Heart right ventricle (tissue), 16 donors: ENCODE measurements at regions of chr7 and their contacts with region 1.

Region 1: DNA sequence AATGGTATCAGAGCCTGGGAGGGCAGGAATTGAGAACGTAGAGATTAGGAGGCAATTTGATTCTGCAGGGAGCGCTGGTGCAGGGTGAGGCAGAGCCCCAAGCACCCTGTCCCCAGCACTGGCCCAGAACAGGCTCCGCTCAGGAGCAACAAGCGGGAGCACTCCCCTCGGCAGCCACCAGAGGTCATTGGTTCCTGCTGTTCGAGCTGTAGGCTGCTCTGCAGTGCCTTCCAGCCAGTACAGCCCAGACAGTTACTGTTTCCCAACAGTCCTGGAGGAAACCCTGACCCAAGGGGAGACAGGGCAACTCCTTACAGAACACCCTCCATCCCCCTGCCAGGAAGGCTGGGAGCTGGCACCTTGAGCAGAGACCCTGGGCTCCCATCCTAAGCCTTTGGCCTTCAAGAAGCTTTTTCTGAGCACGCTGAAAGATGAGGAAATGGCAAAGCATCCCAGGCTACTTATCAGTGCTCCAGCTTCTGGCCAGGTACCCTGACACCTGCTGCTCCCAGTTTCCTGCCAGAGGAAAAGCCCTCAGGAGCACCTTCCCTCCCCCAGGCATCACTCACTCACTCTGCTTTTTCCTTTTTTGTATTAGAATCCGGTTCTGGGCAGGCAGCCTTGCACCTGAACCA is 71.2 kb upstream of the EFCAB10 start:
- DNase-seq: peak; percentile 75 to 79
- ATAC-seq: peak; percentile 86 to 95 (median 90)
- H3K4me3 ChIP-seq: no peak overlapping the region
- H3K27ac ChIP-seq: no peak overlapping the region
- H3K4me1 ChIP-seq: peaks cover 0 to 40% (median 23%) of the 10 kb centered on the region in 9 donors
- H3K27me3 ChIP-seq: no peaks in the 10 kb centered on the region
- CTCF ChIP-seq: peak; percentile 70 to 94 (median 92)

Region 2: GRCh38 chr7:105691733-105692564 is 39.5 kb after region 1 on chr7:
- intact Hi-C with region 1: loop called in 1 of 10 experiments (anchors 5 kb)
- DNase-seq: peak; percentile 50 to 58
- ATAC-seq: peak; percentile 70 to 89 (median 84)
- H3K4me3 ChIP-seq: peak overlapping the region; percentile 21 to 66 (median 56)
- H3K27ac ChIP-seq: peak overlapping the region; percentile 14 to 87 (median 74)
- H3K4me1 ChIP-seq: peaks cover 0 to 14% (median 0%) of the 10 kb centered on the region in 9 donors
- H3K27me3 ChIP-seq: no peaks in the 10 kb centered on the region
- CTCF ChIP-seq: no peak

Region 3: DNA sequence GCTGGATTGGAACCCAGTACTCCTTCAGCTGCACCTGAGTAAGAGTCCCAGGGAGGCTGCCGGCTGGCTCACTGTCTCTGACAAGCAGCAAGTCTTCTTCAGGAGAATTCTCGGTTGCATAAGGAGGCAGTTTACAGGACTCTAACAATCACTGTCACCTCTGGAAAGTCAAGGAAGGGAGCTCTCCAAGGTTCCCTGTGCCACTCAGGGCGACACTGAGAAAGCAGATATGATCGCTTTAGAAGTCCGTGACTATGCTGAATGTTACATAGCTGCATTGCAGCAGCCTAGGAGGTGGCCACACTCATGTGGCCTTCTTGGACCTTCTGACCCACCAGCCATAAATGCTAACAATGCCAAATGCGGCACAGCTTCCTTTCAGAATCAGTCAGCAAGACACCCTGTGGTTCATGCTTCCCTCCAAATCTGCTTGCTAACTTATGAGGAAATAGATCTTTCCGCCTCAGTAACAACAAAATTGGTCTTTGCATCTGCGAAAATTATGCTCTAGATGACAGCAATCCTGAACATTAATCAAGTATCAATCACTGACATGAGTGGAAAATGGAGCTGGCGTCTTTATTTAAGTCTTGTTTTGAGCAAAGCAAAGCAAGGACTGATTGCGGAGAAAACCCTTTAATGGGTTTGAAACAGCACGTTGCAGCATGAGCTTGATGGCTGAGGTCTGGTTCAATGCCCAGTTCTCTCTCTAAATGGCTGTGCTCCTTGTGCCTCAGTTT is 91.0 kb after region 1 on chr7:
- intact Hi-C with region 1: loop called in 1 of 10 experiments (anchors 10 kb)
- DNase-seq: no peak
- ATAC-seq: peak in 2 of 8 donors; percentile 17 to 22
- H3K4me3 ChIP-seq: no peak overlapping the region
- H3K27ac ChIP-seq: no peak overlapping the region
- H3K4me1 ChIP-seq: peaks cover 0 to 13% (median 0%) of the 10 kb centered on the region in 9 donors
- H3K27me3 ChIP-seq: no peaks in the 10 kb centered on the region
- CTCF ChIP-seq: no peak

Region 4: GRCh38 chr7:105876091-105876963 is 223.9 kb after region 1 on chr7 and contains the start of gene ATXN7L1:
- intact Hi-C with region 1: loop called in 4 of 10 experiments (anchors 10 kb)
- DNase-seq: peak; percentile 94 to 95
- ATAC-seq: peak; percentile 95 to 98 (median 96)
- H3K4me3 ChIP-seq: peak within 1 kb of the TSS; percentile 67 to 98 (median 80)
- H3K27ac ChIP-seq: peak within 1 kb of the TSS; percentile 34 to 92 (median 78)
- H3K4me1 ChIP-seq: peaks cover 0 to 34% (median 11%) of the 10 kb centered on the region in 9 donors
- H3K27me3 ChIP-seq: peaks cover 0 to 18% (median 0%) of the 10 kb centered on the region in 7 donors
- CTCF ChIP-seq: peak; percentile 29 to 89 (median 58)
- total RNA-seq, gene ATXN7L1: 3.1 to 7.2 (median 5.6) TPM

Region 5: DNA sequence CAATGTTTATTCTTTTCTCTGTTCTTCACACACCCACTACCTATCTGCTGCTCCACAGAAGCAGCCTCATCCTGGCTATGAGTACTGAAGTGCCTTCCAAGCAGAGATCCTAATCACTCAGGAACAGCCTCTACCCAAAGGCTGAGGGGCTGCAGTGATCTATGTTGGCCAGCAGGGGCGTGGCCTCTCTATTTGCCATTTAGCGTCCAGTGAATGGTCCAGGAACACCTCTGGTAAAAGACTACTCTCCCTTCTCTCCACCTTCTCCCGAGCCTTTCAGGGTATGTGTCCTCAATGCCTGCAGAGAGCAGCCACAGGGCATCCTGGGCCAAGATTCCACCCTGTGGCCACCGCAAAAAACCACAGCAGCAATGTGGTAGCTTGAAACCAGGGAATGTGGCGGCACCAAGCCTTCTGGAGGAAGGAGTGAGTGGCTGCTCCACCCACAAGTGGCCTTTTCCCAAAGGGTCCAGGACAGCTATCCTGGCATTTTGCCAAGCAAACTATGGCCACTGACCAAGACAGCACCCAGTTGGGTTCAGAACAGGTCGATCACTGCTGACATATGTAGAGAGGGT is 388.8 kb after region 1 on chr7:
- intact Hi-C with region 1: loop called in 9 of 10 experiments (anchors 2 to 10 kb)
- DNase-seq: no peak
- ATAC-seq: peak in 2 of 8 donors; percentile 23 to 26
- H3K4me3 ChIP-seq: no peak overlapping the region
- H3K27ac ChIP-seq: no peak overlapping the region
- H3K4me1 ChIP-seq: peaks cover 0 to 21% (median 8%) of the 10 kb centered on the region in 9 donors
- H3K27me3 ChIP-seq: peaks cover 0 to 19% (median 0%) of the 10 kb centered on the region in 7 donors
- CTCF ChIP-seq: peak; percentile 34 to 78 (median 66)

Region 6: GRCh38 chr7:106166655-106167342 is 514.3 kb after region 1 on chr7:
- intact Hi-C with region 1: loop called in 1 of 10 experiments (anchors 10 kb)
- DNase-seq: peak in 1 of 2 donors; percentile 75
- ATAC-seq: peak in 7 of 8 donors; percentile 59 to 88 (median 78)
- H3K4me3 ChIP-seq: no peak overlapping the region
- H3K27ac ChIP-seq: peak overlapping the region in 6 of 10 donors; percentile 1 to 37 (median 24)
- H3K4me1 ChIP-seq: peaks cover 0 to 23% (median 5%) of the 10 kb centered on the region in 9 donors
- H3K27me3 ChIP-seq: no peaks in the 10 kb centered on the region
- CTCF ChIP-seq: peak; percentile 77 to 90 (median 85)